HEK293 (cell line): ENCODE measurements at regions of chr2 and their contacts with region 1.

Region 1: DNA sequence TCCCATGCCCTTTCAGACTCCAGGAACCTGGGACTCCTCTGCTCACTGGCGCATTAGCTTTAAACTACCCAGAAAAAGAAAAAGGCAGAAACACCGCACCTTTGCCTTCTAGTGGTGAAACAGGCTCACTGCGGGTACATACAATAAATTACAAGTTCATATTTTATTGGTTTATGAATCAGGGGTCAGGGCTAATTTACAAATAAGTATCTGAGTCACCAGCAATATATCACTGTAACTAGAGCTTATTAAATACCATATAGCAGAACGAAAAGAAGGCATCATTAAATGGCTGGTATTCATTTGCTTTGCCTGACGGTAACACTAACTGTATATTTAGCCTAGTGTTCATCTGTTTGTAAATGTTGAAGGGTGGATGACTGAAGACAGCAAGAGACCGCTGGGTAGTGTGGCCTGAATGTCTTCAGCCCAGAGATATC is 26.9 kb upstream of the DTNB start:
- H3K4me3 ChIP-seq: no peak overlapping the region
- H3K27ac ChIP-seq: no peak overlapping the region
- H3K4me1 ChIP-seq: peaks cover 12% of the 10 kb centered on the region
- CTCF ChIP-seq: no peak

Region 2: GRCh38 chr2:25651071-25651470 is 49.2 kb before region 1 on chr2:
- CTCF ChIA-PET with region 1: no interaction called
- POLR2A ChIA-PET with region 1: no interaction called
- H3K4me3 ChIP-seq: no peak overlapping the region
- H3K27ac ChIP-seq: no peak overlapping the region
- H3K4me1 ChIP-seq: no peaks in the 10 kb centered on the region
- CTCF ChIP-seq: no peak

Region 3: GRCh38 chr2:25690058-25690457 is 10.2 kb before region 1 on chr2:
- CTCF ChIA-PET with region 1: interaction called, 54 read pairs
- POLR2A ChIA-PET with region 1: no interaction called
- H3K4me3 ChIP-seq: no peak overlapping the region
- H3K27ac ChIP-seq: no peak overlapping the region
- H3K4me1 ChIP-seq: no peaks in the 10 kb centered on the region
- CTCF ChIP-seq: no peak

Region 4: DNA sequence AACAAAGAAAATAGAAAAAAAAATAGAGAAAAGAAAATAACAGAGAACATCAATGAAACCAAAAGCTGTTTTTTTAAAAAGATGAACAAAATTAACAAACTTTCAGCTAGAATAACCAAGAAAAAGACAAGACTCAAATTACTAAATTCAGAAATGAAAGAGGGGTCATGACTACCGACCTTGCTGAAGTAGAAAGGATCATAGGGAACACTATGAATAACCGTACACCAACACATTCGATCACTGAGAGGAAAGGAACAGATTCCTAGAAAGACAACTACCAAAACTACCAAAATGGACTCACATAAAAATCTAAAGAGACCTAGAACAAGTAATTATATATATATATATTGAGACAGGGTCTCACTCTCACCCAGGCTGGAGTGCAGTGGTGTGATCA is 10.5 kb after region 1 on chr2:
- CTCF ChIA-PET with region 1: interaction called, 14 read pairs
- POLR2A ChIA-PET with region 1: interaction called, 3 read pairs
- H3K4me3 ChIP-seq: no peak overlapping the region
- H3K27ac ChIP-seq: no peak overlapping the region
- H3K4me1 ChIP-seq: no peaks in the 10 kb centered on the region
- CTCF ChIP-seq: no peak